IMR-90 (cell line): ENCODE measurements at regions of chr17 and their contacts with region 1.

Region 1: GRCh38 chr17:7862692-7863437 is 5.1 kb downstream of the CYB5D1 start:
- DNase-seq: peak; percentile 54
- ATAC-seq: no peak
- H3K4me3 ChIP-seq: no peak overlapping the region
- H3K27ac ChIP-seq: no peak overlapping the region
- H3K4me1 ChIP-seq: peaks cover 7% of the 10 kb centered on the region
- H3K27me3 ChIP-seq: no peaks in the 10 kb centered on the region
- CTCF ChIP-seq: peak; percentile 75
- POLR2A ChIP-seq: no peak; the same call in 1 of the 2 replicates
- RAD21 ChIP-seq: peak; percentile 83

Region 2: GRCh38 chr17:7818746-7819645 is 43.9 kb before region 1 on chr17:
- CTCF ChIA-PET with region 1: no interaction called
- POLR2A ChIA-PET with region 1: no interaction called
- dilution Hi-C with region 1: no loop called
- in situ Hi-C with region 1: no loop called
- intact Hi-C with region 1: no loop called
- DNase-seq: no peak
- ATAC-seq: no peak
- H3K4me3 ChIP-seq: no peak overlapping the region
- H3K27ac ChIP-seq: no peak overlapping the region
- H3K4me1 ChIP-seq: no peaks in the 10 kb centered on the region
- H3K27me3 ChIP-seq: peaks cover 49% of the 10 kb centered on the region
- CTCF ChIP-seq: no peak
- POLR2A ChIP-seq: no peak
- RAD21 ChIP-seq: no peak

Region 3: DNA sequence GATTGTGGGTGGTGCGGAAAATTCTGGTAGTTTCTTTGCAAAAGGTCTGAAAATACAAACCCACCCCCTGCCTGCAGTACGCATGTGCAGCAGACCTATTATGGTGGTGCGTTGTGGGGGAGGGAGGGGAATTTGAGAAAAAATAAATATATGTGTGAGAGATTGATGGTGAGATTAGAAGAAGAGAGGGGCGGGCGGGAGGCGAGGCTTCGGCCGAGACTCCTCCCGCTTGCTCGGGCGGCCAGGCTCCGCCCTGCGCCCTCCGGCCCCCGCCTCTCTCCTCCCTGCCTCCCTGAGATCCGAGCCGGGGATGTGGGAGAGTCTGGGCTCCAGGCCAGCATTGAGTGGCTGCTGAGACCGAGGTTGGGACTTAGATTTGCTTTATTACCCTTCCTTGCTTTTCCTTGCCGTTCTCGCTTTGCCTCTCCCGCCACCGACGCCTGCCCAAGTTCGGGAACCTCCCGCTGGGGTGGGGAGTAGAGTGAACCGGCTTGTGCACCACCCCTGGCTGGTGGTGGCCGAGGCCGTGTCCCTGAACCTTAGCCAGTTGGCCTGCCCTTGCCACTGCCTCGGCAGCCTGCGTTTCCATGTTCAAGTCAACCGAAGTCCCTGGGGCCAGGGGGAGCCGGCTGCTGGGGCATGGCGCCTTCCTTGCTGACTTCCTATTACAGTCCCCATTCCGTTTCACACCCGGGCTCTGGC is 24.8 kb after region 1 on chr17:
- CTCF ChIA-PET with region 1: interaction called, 4 read pairs
- POLR2A ChIA-PET with region 1: interaction called, 9 read pairs
- dilution Hi-C with region 1: no loop called
- in situ Hi-C with region 1: no loop called
- intact Hi-C with region 1: loop called (anchors 2 kb)
- DNase-seq: peak; percentile 98
- ATAC-seq: peak; percentile 87
- H3K4me3 ChIP-seq: peak overlapping the region; percentile 46
- H3K27ac ChIP-seq: peak overlapping the region; percentile 100
- H3K4me1 ChIP-seq: peaks cover 24% of the 10 kb centered on the region
- H3K27me3 ChIP-seq: no peaks in the 10 kb centered on the region
- CTCF ChIP-seq: no peak
- POLR2A ChIP-seq: 0 out of 2 replicates have a peak, but pooled peaks have one; percentile 7
- RAD21 ChIP-seq: no peak

Region 4: DNA sequence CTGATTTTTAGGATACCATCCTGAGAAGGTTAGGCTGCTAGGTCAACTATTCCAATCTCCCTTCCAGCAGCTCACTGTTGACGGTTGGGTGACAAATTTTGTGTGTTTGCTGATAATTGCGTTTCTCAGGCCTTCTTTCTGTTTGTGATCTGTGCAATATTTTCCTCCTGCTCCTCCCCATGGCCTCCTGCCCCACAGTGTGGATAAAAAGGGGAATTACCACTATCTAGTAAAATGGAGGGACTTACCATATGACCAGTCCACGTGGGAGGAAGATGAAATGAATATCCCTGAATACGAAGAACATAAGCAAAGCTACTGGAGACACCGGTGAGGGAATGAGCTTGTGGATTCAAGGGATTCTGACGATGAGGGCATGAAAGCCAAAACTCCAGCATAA is 34.9 kb after region 1 on chr17:
- CTCF ChIA-PET with region 1: no interaction called
- POLR2A ChIA-PET with region 1: no interaction called
- dilution Hi-C with region 1: no loop called
- in situ Hi-C with region 1: loop called (anchors 5 kb)
- intact Hi-C with region 1: loop called (anchors 1 kb)
- DNase-seq: peak; percentile 77
- ATAC-seq: peak; percentile 90
- H3K4me3 ChIP-seq: no peak overlapping the region
- H3K27ac ChIP-seq: no peak overlapping the region
- H3K4me1 ChIP-seq: no peaks in the 10 kb centered on the region
- H3K27me3 ChIP-seq: no peaks in the 10 kb centered on the region
- CTCF ChIP-seq: peak; percentile 77
- POLR2A ChIP-seq: no peak
- RAD21 ChIP-seq: peak; percentile 88

Region 5: GRCh38 chr17:8041249-8041928 is 178.5 kb after region 1 on chr17:
- CTCF ChIA-PET with region 1: interaction called, 4 read pairs
- POLR2A ChIA-PET with region 1: no interaction called
- dilution Hi-C with region 1: no loop called
- in situ Hi-C with region 1: no loop called
- intact Hi-C with region 1: loop called (anchors 1 kb)
- DNase-seq: peak; percentile 73
- ATAC-seq: peak; percentile 84
- H3K4me3 ChIP-seq: no peak overlapping the region
- H3K27ac ChIP-seq: no peak overlapping the region
- H3K4me1 ChIP-seq: no peaks in the 10 kb centered on the region
- H3K27me3 ChIP-seq: peaks cover 47% of the 10 kb centered on the region
- CTCF ChIP-seq: peak; percentile 73
- POLR2A ChIP-seq: no peak
- RAD21 ChIP-seq: peak; percentile 83